Naive thymus-derived CD4-positive, alpha-beta T cell (primary cell): ENCODE measurements at regions of chr5 and their contacts with region 1.

Region 1: GRCh38 chr5:177113566-177114424 is 19.8 kb upstream of the NSD1 start:
- DNase-seq: peak; percentile 59 to 83 (median 75)
- ATAC-seq: peak; percentile 77
- H3K4me3 ChIP-seq: no peak overlapping the region
- H3K4me3 Mint-ChIP-seq: peak overlapping the region in 1 of 10 donors; percentile 47
- H3K27ac ChIP-seq: no peak overlapping the region
- H3K27ac Mint-ChIP-seq: peak overlapping the region in 3 of 9 donors; percentile 33 to 80 (median 67)
- H3K4me1 ChIP-seq: peaks cover 9 to 12% of the 10 kb centered on the region in 2 donors
- H3K4me1 Mint-ChIP-seq: peaks cover 10 to 30% (median 20%) of the 10 kb centered on the region in 7 donors
- H3K27me3 ChIP-seq: no peaks in the 10 kb centered on the region
- H3K27me3 Mint-ChIP-seq: no peaks in the 10 kb centered on the region

Region 2: GRCh38 chr5:176537608-176538504 is 575.9 kb before region 1 on chr5:
- CTCF ChIA-PET with region 1: no interaction called
- POLR2A ChIA-PET with region 1: no interaction called
- intact Hi-C with region 1: no loop called
- DNase-seq: peak; percentile 80 to 99 (median 96)
- ATAC-seq: peak; percentile 83
- H3K4me3 ChIP-seq: peak overlapping the region; percentile 100
- H3K4me3 Mint-ChIP-seq: peak overlapping the region; percentile 96 to 100 (median 99)
- H3K27ac ChIP-seq: peak overlapping the region; percentile 96
- H3K27ac Mint-ChIP-seq: peak overlapping the region; percentile 99 to 100 (median 99)
- H3K4me1 ChIP-seq: peaks cover 57 to 63% of the 10 kb centered on the region in 2 donors
- H3K4me1 Mint-ChIP-seq: peaks cover 55 to 74% (median 71%) of the 10 kb centered on the region in 7 donors
- H3K27me3 ChIP-seq: no peaks in the 10 kb centered on the region
- H3K27me3 Mint-ChIP-seq: no peaks in the 10 kb centered on the region

Region 3: GRCh38 chr5:176660860-176661641 is 452.7 kb before region 1 on chr5:
- CTCF ChIA-PET with region 1: interaction called, 13 read pairs
- POLR2A ChIA-PET with region 1: no interaction called
- intact Hi-C with region 1: loop called (anchors 1 to 2 kb)
- DNase-seq: peak; percentile 62 to 87 (median 75)
- ATAC-seq: peak; percentile 84
- H3K4me3 ChIP-seq: peak overlapping the region; percentile 13
- H3K4me3 Mint-ChIP-seq: peak overlapping the region in 5 of 10 donors; percentile 5 to 70 (median 59)
- H3K27ac ChIP-seq: no peak overlapping the region
- H3K27ac Mint-ChIP-seq: peak overlapping the region in 5 of 9 donors; percentile 49 to 72 (median 67)
- H3K4me1 ChIP-seq: peaks cover 25 to 31% of the 10 kb centered on the region in 2 donors
- H3K4me1 Mint-ChIP-seq: peaks cover 26 to 35% (median 33%) of the 10 kb centered on the region in 7 donors
- H3K27me3 ChIP-seq: no peaks in the 10 kb centered on the region
- H3K27me3 Mint-ChIP-seq: peaks cover 6 to 19% (median 11%) of the 10 kb centered on the region in 5 donors

Region 4: DNA sequence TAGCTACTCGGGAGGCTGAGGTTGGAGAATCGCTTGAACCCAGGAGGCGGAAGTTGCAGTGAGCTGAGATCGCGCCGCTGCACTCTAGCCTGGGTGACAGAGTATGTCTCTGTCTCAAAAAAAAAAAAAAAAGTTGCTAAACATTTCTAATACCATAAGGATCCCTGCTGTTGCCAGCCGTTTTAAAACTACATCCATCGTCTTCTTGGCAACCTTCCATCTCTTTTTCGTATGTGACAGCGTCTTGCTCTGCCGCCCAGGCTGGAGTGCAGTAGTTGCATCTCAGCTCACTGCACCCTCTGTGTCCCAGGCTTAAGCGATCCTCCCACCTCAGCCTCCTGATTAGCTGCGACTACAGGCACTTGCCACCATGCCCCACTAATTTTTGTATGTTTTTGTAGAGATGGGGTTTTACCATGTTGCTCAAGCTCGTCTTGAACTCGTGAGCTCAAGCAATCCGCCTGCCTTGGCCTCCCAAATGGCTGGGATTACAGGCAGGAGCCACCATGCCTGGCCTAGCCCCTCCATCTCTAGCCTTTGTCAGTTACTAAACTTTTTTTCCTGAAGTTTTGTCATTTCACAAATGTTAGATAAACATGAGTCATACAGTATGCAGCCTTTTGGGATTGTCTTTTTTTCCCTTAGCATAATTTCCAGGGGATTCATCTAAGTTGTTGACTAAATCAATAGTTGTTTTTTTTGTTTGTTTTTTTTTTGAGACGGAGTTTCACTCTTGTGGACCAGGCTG is 33.3 kb after region 1 on chr5:
- CTCF ChIA-PET with region 1: interaction called, 7 read pairs
- POLR2A ChIA-PET with region 1: interaction called, 3 read pairs
- intact Hi-C with region 1: loop called in 1 of 2 experiments (anchors 5 kb)
- DNase-seq: no peak
- ATAC-seq: no peak
- H3K4me3 ChIP-seq: no peak overlapping the region
- H3K4me3 Mint-ChIP-seq: no peak overlapping the region
- H3K27ac ChIP-seq: no peak overlapping the region
- H3K27ac Mint-ChIP-seq: peak overlapping the region in 3 of 9 donors; percentile 17 to 56 (median 51)
- H3K4me1 ChIP-seq: no peaks in the 10 kb centered on the region
- H3K4me1 Mint-ChIP-seq: peaks cover 7 to 32% (median 22%) of the 10 kb centered on the region in 7 donors
- H3K27me3 ChIP-seq: no peaks in the 10 kb centered on the region
- H3K27me3 Mint-ChIP-seq: no peaks in the 10 kb centered on the region

Region 5: DNA sequence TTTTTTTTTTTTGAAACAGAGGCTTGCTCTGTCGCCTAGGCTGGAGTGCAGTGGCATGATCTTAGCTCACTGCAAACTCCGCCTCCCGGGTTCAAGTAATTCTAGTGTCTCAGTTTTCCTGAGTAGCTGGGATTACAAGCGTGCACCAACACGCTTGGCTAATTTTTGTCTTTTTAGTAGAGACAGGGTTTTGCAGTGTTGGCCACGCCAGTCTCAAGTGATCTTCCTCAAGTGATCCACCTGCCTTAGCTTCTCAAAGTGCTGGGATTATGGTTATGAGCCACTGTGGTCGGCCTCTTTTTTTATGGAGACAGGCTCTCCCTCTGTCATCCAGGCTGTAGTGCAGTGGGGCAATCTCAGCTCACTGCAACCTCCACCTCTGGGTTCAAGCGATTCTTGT is 106.8 kb after region 1 on chr5:
- CTCF ChIA-PET with region 1: interaction called, 10 read pairs
- POLR2A ChIA-PET with region 1: no interaction called
- intact Hi-C with region 1: loop called in 1 of 2 experiments (anchors 5 kb)
- DNase-seq: no peak
- ATAC-seq: no peak
- H3K4me3 ChIP-seq: no peak overlapping the region
- H3K4me3 Mint-ChIP-seq: no peak overlapping the region
- H3K27ac ChIP-seq: no peak overlapping the region
- H3K27ac Mint-ChIP-seq: no peak overlapping the region
- H3K4me1 ChIP-seq: no peaks in the 10 kb centered on the region
- H3K4me1 Mint-ChIP-seq: peaks cover 9 to 60% (median 56%) of the 10 kb centered on the region in 7 donors
- H3K27me3 ChIP-seq: no peaks in the 10 kb centered on the region
- H3K27me3 Mint-ChIP-seq: no peaks in the 10 kb centered on the region

Region 6: GRCh38 chr5:177264178-177264577 is 150.4 kb after region 1 on chr5:
- CTCF ChIA-PET with region 1: interaction called, 9 read pairs
- POLR2A ChIA-PET with region 1: no interaction called
- intact Hi-C with region 1: loop called in 1 of 2 experiments (anchors 5 kb)
- DNase-seq: no peak
- ATAC-seq: no peak
- H3K4me3 ChIP-seq: no peak overlapping the region
- H3K4me3 Mint-ChIP-seq: no peak overlapping the region
- H3K27ac ChIP-seq: no peak overlapping the region
- H3K27ac Mint-ChIP-seq: peak overlapping the region in 2 of 9 donors; percentile 33 to 36
- H3K4me1 ChIP-seq: no peaks in the 10 kb centered on the region
- H3K4me1 Mint-ChIP-seq: peaks cover 0 to 10% (median 0%) of the 10 kb centered on the region in 7 donors
- H3K27me3 ChIP-seq: no peaks in the 10 kb centered on the region
- H3K27me3 Mint-ChIP-seq: no peaks in the 10 kb centered on the region

Region 7: GRCh38 chr5:177390363-177391300 is 276.8 kb after region 1 on chr5:
- CTCF ChIA-PET with region 1: no interaction called
- POLR2A ChIA-PET with region 1: interaction called, 3 read pairs
- intact Hi-C with region 1: loop called in 1 of 2 experiments (anchors 5 kb)
- DNase-seq: peak; percentile 76 to 91 (median 88)
- ATAC-seq: peak; percentile 89
- H3K4me3 ChIP-seq: no peak overlapping the region
- H3K4me3 Mint-ChIP-seq: peak overlapping the region in 9 of 10 donors; percentile 29 to 68 (median 53)
- H3K27ac ChIP-seq: peak overlapping the region; percentile 63
- H3K27ac Mint-ChIP-seq: peak overlapping the region in 8 of 9 donors; percentile 65 to 86 (median 78)
- H3K4me1 ChIP-seq: peaks cover 31 to 33% of the 10 kb centered on the region in 2 donors
- H3K4me1 Mint-ChIP-seq: peaks cover 30 to 39% (median 34%) of the 10 kb centered on the region in 7 donors
- H3K27me3 ChIP-seq: no peaks in the 10 kb centered on the region
- H3K27me3 Mint-ChIP-seq: peaks cover 0 to 6% (median 0%) of the 10 kb centered on the region in 5 donors

Region 8: DNA sequence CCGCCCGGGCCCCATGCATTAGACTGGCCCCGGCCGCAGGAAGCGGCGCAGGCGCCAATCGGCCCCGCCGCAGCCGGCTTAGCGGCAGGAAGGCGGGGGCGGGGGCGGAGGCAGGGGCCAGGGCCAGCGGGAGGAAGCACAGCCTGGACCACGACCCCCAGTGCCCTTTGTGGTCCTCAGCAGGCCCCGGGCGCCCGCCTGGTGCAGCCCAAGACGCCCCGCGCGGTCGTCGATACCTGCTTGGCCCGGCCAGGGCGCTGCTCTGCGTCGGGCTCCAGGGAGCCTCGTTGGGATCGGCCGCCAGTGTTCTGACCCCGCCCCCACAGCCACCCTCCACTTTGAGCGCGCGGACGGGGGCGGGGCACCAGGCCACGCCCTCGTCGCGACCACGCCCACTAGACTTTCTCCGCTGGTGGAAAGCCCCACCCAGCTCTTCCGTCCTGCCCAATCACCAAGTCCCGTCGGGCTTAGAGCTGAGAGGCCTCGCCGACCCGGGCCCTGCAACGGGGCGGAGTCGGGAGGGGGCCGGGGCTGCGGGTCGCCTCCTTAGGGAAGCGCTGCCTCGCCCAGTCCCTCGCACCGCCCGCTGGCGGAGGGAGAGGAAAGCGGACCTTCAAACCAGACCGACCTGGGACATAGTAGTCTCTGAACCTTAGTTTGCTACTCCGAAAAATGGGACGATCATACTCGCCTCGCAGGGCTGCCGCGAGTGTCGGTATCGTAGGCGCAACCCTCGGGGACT is 383.7 kb after region 1 on chr5 and contains the start of gene PDLIM7:
- CTCF ChIA-PET with region 1: interaction called, 4 read pairs
- POLR2A ChIA-PET with region 1: no interaction called
- intact Hi-C with region 1: loop called (anchors 1 to 5 kb)
- DNase-seq: peak; percentile 88 to 97 (median 92)
- ATAC-seq: peak; percentile 92
- H3K4me3 ChIP-seq: peak within 1 kb of the TSS; percentile 77
- H3K4me3 Mint-ChIP-seq: peak within 1 kb of the TSS; percentile 77 to 90 (median 84)
- H3K27ac ChIP-seq: peak within 1 kb of the TSS; percentile 61
- H3K27ac Mint-ChIP-seq: peak within 1 kb of the TSS; percentile 28 to 77 (median 66)
- H3K4me1 ChIP-seq: peaks cover 7 to 10% of the 10 kb centered on the region in 2 donors
- H3K4me1 Mint-ChIP-seq: peaks cover 24 to 44% (median 28%) of the 10 kb centered on the region in 7 donors
- H3K27me3 ChIP-seq: no peaks in the 10 kb centered on the region
- H3K27me3 Mint-ChIP-seq: peaks cover 0 to 24% (median 0%) of the 10 kb centered on the region in 5 donors
- total RNA-seq, gene PDLIM7: 4.1 to 63.2 (median 11.9) TPM

Region 9: DNA sequence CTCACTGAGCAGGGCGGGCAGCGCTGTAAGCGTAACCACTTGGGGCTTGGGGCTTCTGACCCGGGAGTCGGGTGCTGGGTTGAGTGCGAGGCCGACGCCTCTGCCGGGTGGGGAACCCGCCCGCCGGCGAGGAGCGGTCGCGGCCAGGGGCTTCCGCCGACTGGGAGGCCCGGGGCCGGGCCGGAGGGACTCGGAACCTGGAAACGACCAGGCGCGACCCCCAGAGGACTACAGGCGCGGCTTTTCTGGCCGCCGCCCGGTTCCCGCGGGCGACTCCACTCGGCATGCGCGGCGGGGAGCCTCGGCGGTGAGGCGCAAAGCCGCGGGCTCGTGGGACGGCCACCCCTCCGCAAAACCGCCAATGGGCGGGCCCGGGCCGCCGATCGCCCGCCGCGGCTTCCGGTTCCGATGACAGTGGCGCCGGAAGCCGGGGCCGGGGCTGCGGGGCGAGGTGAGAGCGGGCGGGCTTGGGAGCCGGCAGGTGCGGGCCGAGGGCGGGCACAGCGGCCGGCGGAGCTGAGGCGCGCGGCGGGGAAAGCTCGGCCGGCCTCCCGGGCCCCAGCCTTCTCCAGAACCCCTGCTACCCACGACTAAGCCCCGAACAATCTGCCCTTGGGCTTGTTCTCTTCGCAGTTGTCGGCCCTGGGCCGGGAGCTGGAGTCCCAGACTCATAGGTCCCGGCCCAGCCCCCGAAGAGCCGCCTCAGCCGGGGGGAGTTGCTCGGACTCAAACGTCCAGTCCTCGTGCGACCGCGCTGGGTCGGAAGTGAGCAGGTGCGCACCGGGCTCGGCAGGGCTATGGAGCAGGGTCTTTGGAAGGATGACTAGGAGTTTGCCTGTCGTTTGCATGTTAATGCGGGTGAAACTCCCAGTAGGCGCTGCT is 1017.0 kb after region 1 on chr5 and contains the start of gene RMND5B:
- CTCF ChIA-PET with region 1: no interaction called
- POLR2A ChIA-PET with region 1: no interaction called
- intact Hi-C with region 1: no loop called
- DNase-seq: peak; percentile 72 to 91 (median 79)
- ATAC-seq: peak; percentile 94
- H3K4me3 ChIP-seq: peak within 1 kb of the TSS; percentile 71
- H3K4me3 Mint-ChIP-seq: peak within 1 kb of the TSS; percentile 75 to 95 (median 86)
- H3K27ac ChIP-seq: peak within 1 kb of the TSS; percentile 84
- H3K27ac Mint-ChIP-seq: peak within 1 kb of the TSS; percentile 51 to 97 (median 93)
- H3K4me1 ChIP-seq: peaks cover 5 to 8% of the 10 kb centered on the region in 2 donors
- H3K4me1 Mint-ChIP-seq: peaks cover 16 to 39% (median 27%) of the 10 kb centered on the region in 7 donors
- H3K27me3 ChIP-seq: no peaks in the 10 kb centered on the region
- H3K27me3 Mint-ChIP-seq: peaks cover 0 to 4% (median 0%) of the 10 kb centered on the region in 5 donors
- total RNA-seq, gene RMND5B: 21.0 to 42.7 (median 23.3) TPM